WTC11 (cell line): ENCODE measurements at regions of chr9 and their contacts with region 1.

Region 1: DNA sequence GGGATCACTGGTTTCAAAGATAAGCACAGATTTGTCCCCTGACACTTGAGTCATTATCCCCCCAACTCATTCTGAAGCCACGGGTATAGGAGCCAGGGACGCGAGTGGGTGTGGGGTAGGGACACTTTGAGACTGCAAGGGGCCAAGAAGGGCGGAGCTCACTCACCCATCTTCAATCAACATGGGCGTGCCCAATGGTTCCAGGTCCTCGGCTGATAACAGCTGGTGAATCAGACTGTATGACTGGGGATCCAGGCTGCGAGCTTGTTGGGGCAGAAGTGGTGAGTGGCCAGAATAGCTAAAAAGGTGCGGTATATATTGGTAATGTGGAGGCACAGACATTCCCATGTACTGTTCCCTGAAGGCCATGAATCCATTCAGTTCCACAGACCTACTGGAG is 30.7 kb upstream of the NR5A1 start:
- DNase-seq: no peak
- ATAC-seq: no peak
- H3K4me3 Mint-ChIP-seq: no peak overlapping the region
- H3K27ac Mint-ChIP-seq: no peak overlapping the region
- H3K4me1 Mint-ChIP-seq: no peaks in the 10 kb centered on the region
- H3K27me3 Mint-ChIP-seq: no peaks in the 10 kb centered on the region
- CTCF ChIP-seq: no peak

Region 2: GRCh38 chr9:124210697-124211096 is 327.2 kb before region 1 on chr9:
- CTCF ChIA-PET with region 1: no interaction called
- POLR2A ChIA-PET with region 1: no interaction called
- DNase-seq: no peak
- ATAC-seq: no peak
- H3K4me3 Mint-ChIP-seq: no peak overlapping the region
- H3K27ac Mint-ChIP-seq: no peak overlapping the region
- H3K4me1 Mint-ChIP-seq: peaks cover 7% of the 10 kb centered on the region; the same call in 1 of the 2 replicates
- H3K27me3 Mint-ChIP-seq: peaks cover 8% of the 10 kb centered on the region
- CTCF ChIP-seq: no peak

Region 3: GRCh38 chr9:124222918-124223720 is 314.8 kb before region 1 on chr9:
- CTCF ChIA-PET with region 1: no interaction called
- POLR2A ChIA-PET with region 1: no interaction called
- DNase-seq: no peak
- ATAC-seq: no peak
- H3K4me3 Mint-ChIP-seq: no peak overlapping the region
- H3K27ac Mint-ChIP-seq: no peak overlapping the region
- H3K4me1 Mint-ChIP-seq: no peaks in the 10 kb centered on the region
- H3K27me3 Mint-ChIP-seq: no peaks in the 10 kb centered on the region
- CTCF ChIP-seq: no peak

Region 4: DNA sequence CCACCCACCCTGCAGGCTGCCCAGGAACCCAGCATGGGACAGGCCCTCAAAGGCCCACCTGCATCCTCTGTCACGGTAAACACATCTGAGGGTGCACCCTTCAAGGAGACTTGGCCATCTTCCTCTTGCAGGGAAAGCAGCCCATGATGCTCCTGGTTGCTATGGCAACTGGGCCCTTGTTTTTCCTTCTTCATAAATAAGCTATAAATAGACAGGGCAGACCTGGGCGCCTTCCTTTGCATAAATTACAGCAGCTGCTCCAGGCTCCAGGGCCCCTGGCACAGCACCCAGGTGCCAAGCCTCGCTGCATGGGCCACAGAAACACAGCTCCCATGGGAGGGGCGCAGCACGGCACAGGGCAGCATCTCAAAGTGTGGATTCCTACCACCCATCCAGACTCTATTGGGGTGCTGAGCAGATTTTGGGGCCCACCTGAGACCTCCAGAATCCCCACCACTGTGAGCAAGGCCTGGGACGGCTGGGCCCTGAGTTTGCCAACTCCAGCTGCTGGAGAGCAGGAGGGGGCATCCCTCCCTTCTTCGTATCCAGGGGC is 116.9 kb before region 1 on chr9:
- CTCF ChIA-PET with region 1: interaction called, 19 read pairs
- POLR2A ChIA-PET with region 1: no interaction called
- DNase-seq: no peak
- ATAC-seq: no peak
- H3K4me3 Mint-ChIP-seq: no peak overlapping the region
- H3K27ac Mint-ChIP-seq: no peak overlapping the region
- H3K4me1 Mint-ChIP-seq: no peaks in the 10 kb centered on the region
- H3K27me3 Mint-ChIP-seq: peaks cover 9% of the 10 kb centered on the region
- CTCF ChIP-seq: no peak

Region 5: DNA sequence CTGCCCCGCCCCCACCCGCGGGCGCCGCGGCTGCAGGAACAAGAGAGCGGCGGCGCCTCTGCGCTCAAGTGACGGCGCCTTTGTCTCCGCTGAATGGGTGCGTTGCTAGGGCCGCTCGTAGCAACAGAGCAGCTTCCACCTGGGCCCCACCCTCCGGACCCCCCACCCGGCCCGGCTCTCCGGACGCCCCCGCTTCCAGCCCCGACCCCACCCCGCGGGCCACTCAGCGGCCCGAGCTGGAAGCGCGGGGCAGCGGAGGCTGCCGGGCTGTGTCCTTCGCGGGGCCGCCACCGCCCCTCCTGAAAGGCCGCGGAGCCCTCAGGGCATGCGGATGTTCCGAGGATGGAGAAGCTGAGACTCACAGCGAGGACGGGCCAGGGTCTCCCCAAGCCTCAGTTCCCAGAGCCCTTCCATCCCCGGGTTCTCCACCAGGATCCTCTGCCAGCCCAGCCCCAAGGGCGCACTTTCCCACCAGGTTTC is 60.1 kb before region 1 on chr9:
- CTCF ChIA-PET with region 1: interaction called, 12 read pairs
- POLR2A ChIA-PET with region 1: no interaction called
- DNase-seq: peak; percentile 57
- ATAC-seq: peak; percentile 15
- H3K4me3 Mint-ChIP-seq: peak overlapping the region; percentile 60
- H3K27ac Mint-ChIP-seq: no peak overlapping the region
- H3K4me1 Mint-ChIP-seq: peaks cover 29% of the 10 kb centered on the region
- H3K27me3 Mint-ChIP-seq: peaks cover 56% of the 10 kb centered on the region
- CTCF ChIP-seq: no peak

Region 6: GRCh38 chr9:124513376-124513994 is 24.4 kb before region 1 on chr9:
- CTCF ChIA-PET with region 1: interaction called, 37 read pairs
- POLR2A ChIA-PET with region 1: no interaction called
- DNase-seq: no peak
- ATAC-seq: 0 out of 2 replicates have a peak, but pooled peaks have one; percentile 6
- H3K4me3 Mint-ChIP-seq: no peak overlapping the region
- H3K27ac Mint-ChIP-seq: no peak overlapping the region
- H3K4me1 Mint-ChIP-seq: peaks cover 18% of the 10 kb centered on the region
- H3K27me3 Mint-ChIP-seq: no peaks in the 10 kb centered on the region
- CTCF ChIP-seq: no peak

Region 7: GRCh38 chr9:124551472-124552272 is 13.7 kb after region 1 on chr9:
- CTCF ChIA-PET with region 1: interaction called, 42 read pairs
- POLR2A ChIA-PET with region 1: no interaction called
- DNase-seq: peak; percentile 77
- ATAC-seq: peak; percentile 98
- H3K4me3 Mint-ChIP-seq: no peak overlapping the region
- H3K27ac Mint-ChIP-seq: no peak overlapping the region
- H3K4me1 Mint-ChIP-seq: peaks cover 13% of the 10 kb centered on the region
- H3K27me3 Mint-ChIP-seq: no peaks in the 10 kb centered on the region
- CTCF ChIP-seq: peak; percentile 23; the same call in 1 of the 2 replicates

Region 8: DNA sequence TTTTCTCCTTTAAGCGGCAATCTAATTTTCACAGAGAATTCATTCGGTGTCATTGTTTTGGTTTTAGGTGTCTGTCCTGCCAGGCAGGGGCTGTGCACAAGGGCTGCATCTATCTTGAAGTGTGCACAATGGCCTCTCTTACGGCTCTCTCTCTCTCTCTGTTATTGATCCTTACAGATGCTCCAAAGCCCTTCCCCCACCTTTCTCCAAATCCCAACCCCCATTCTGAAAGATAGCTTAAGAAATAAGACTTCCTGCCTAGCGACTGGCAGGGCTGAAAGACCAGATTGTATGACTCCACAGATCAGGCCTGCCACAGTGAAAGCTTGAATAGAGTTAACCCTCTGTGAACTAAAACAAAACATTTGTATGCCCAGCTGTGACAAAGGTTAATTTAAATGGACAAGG is 55.7 kb after region 1 on chr9:
- CTCF ChIA-PET with region 1: interaction called, 17 read pairs
- POLR2A ChIA-PET with region 1: no interaction called
- DNase-seq: peak; percentile 31
- ATAC-seq: peak; percentile 85
- H3K4me3 Mint-ChIP-seq: peak overlapping the region; percentile 60
- H3K27ac Mint-ChIP-seq: peak overlapping the region; percentile 95
- H3K4me1 Mint-ChIP-seq: peaks cover 81% of the 10 kb centered on the region
- H3K27me3 Mint-ChIP-seq: no peaks in the 10 kb centered on the region
- CTCF ChIP-seq: no peak